GM12878 (cell line): ENCODE measurements at regions of chr7 and their contacts with region 1.

Region 1: DNA sequence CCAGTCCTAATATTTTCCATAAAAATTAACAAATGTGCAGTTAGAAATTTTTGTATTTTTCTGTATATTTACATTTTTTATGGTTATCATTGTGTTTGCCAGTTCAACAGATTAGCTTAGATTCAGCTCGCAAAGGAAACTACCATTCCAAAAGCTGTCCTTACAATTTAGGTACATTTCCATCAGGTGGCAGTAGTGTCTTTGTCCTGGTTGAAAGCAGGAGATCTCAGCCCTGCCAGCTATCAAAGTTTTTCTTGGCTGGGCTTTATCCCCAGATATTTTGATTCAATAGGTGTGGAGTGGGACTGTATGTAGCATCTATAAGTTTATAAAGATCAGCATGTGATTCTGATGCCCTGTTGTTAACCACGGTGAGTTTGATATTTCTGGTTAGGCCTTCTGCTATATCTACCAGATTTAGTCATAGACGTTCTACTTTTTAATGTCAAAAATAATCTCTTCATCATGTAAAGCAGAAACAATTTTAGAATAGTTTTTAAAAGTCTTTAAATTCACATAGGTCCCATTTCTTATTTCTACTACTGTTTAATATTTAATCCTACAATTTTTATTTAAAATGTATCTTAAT is 15.5 kb upstream of the ICA1 start:
- DNase-seq: no peak
- ATAC-seq: peak; percentile 55
- H3K4me3 ChIP-seq: no peak overlapping the region
- H3K27ac ChIP-seq: no peak overlapping the region
- H3K4me1 ChIP-seq: no peaks in the 10 kb centered on the region
- H3K27me3 ChIP-seq: peaks cover 0 to 1% of the 10 kb centered on the region in 2 experiments; a peak in 2 of 4 replicates
- CTCF ChIP-seq: peak; percentile 11 to 30 (median 24); a peak in 4 of 6 replicates
- EP300 ChIP-seq: no peak
- POLR2A ChIP-seq: no peak
- RAD21 ChIP-seq: peak; percentile 43

Region 2: GRCh38 chr7:8365503-8366110 is 88.1 kb after region 1 on chr7:
- CTCF ChIA-PET with region 1: no interaction called
- POLR2A ChIA-PET with region 1: no interaction called
- RAD21 ChIA-PET with region 1: interaction called, 3 read pairs
- SMC1A ChIA-PET with region 1: no interaction called
- in situ Hi-C with region 1: no loop called
- intact Hi-C with region 1: loop called (anchors 1 kb)
- DNase-seq: no peak
- ATAC-seq: peak; percentile 82
- H3K4me3 ChIP-seq: no peak overlapping the region
- H3K27ac ChIP-seq: no peak overlapping the region
- H3K4me1 ChIP-seq: no peaks in the 10 kb centered on the region
- H3K27me3 ChIP-seq: no peaks in the 10 kb centered on the region
- CTCF ChIP-seq: peak; percentile 46 to 49 (median 47); a peak in 5 of 6 replicates
- EP300 ChIP-seq: no peak
- POLR2A ChIP-seq: no peak
- RAD21 ChIP-seq: peak; percentile 50